ENCODE measurements at regions of chr5 and their contacts with region 1.

Region 1: GRCh38 chr5:84585218-84585617 is 200.5 kb upstream of the EDIL3 start:
- DNase-seq: no peak
- H3K4me3 ChIP-seq: no peak overlapping the region
- H3K27ac ChIP-seq: no peak overlapping the region
- H3K4me1 ChIP-seq: no peaks in the 10 kb centered on the region
- H3K27me3 ChIP-seq: no peaks in the 10 kb centered on the region
- CTCF ChIP-seq: no peak
- EP300 ChIP-seq: no peak
- POLR2A ChIP-seq: no peak

Region 2: DNA sequence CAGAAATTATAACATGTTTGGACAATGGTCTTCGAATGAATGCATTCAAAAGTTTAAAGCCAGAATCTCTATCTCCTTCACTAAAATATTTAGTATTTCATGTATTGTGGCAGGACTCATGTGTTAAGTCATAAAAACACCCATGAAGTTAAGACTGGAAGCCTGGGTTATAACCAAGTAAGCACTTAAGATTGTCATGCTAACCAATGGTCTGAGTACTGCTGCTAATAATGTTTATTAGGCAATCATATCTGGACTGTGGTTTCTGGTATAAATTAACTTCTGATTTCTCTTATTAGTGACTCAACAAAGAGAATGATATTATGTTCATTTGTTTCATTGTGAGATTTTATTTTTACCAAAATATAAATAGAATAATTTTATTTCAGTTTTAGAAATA is 97.3 kb after region 1 on chr5:
- in situ Hi-C with region 1: no loop called
- intact Hi-C with region 1: loop called (anchors 5 kb)
- DNase-seq: no peak
- H3K4me3 ChIP-seq: no peak overlapping the region
- H3K27ac ChIP-seq: no peak overlapping the region
- H3K4me1 ChIP-seq: no peaks in the 10 kb centered on the region
- H3K27me3 ChIP-seq: no peaks in the 10 kb centered on the region
- CTCF ChIP-seq: no peak
- EP300 ChIP-seq: no peak
- POLR2A ChIP-seq: no peak